Activated CD8-positive, alpha-beta T cell treated with anti-CD3 and anti-CD28 coated beads, Interleukin-2, amount 10 ng/mL, durations not matched to agents 7 days and 5 days (primary cell): ENCODE measurements at regions of chr1 and their contacts with region 1.

Region 1: DNA sequence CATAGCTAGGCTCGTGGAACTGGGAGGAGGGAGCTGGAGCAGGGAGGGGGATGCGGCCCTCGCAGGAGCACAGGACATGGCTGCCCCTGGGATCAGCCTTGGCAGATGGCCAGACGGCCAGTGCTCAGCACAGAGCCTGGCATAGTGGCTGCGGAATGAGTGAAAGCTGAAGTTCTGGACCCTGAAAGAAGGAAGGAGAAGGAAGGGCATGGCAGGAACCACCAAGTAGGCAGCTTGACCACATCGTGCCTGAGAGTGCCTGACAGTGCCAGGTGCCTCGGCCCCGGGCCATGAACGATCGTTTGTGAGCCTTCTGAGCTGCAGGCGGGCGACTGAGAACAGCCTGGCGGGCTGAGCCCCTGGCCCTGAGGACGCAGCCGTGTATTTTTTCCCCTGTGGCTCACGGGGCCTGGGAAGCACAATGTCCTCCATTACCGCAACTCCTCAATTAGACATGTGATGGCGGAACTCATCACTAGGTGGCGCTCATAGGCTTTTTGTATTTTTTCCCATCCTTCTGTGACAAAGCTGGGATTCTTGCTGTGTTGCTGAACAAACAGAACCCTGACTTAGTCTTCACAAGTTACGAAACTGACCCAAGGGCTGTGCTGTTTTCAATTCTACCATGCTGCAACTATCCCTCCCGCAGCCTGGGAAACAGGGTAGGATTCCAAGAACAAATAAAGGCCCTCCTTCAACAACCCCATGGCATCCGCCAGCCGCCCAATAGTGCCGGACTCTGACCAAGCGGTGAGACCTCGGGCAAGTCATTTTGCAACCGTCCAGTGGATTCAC is 29.9 kb upstream of the TMEM61 start:
- DNase-seq: peak; percentile 76
- ATAC-seq: peak; percentile 63
- H3K4me3 Mint-ChIP-seq: no peak overlapping the region
- H3K27ac Mint-ChIP-seq: peak overlapping the region; percentile 58
- H3K4me1 Mint-ChIP-seq: peaks cover 20% of the 10 kb centered on the region
- H3K27me3 Mint-ChIP-seq: peaks cover 7% of the 10 kb centered on the region

Region 2: GRCh38 chr1:54965624-54966340 is 15.2 kb after region 1 on chr1:
- CTCF ChIA-PET with region 1: interaction called, 18 read pairs
- POLR2A ChIA-PET with region 1: no interaction called
- DNase-seq: no peak
- ATAC-seq: peak; percentile 51
- H3K4me3 Mint-ChIP-seq: no peak overlapping the region
- H3K27ac Mint-ChIP-seq: no peak overlapping the region
- H3K4me1 Mint-ChIP-seq: peaks cover 10% of the 10 kb centered on the region
- H3K27me3 Mint-ChIP-seq: peaks cover 10% of the 10 kb centered on the region

Region 3: GRCh38 chr1:54996359-54996868 is 45.8 kb after region 1 on chr1:
- CTCF ChIA-PET with region 1: interaction called, 119 read pairs
- POLR2A ChIA-PET with region 1: interaction called, 3 read pairs
- DNase-seq: peak; percentile 86
- ATAC-seq: peak; percentile 82
- H3K4me3 Mint-ChIP-seq: peak overlapping the region; percentile 42
- H3K27ac Mint-ChIP-seq: peak overlapping the region; percentile 87
- H3K4me1 Mint-ChIP-seq: peaks cover 40% of the 10 kb centered on the region
- H3K27me3 Mint-ChIP-seq: peaks cover 32% of the 10 kb centered on the region

Region 4: DNA sequence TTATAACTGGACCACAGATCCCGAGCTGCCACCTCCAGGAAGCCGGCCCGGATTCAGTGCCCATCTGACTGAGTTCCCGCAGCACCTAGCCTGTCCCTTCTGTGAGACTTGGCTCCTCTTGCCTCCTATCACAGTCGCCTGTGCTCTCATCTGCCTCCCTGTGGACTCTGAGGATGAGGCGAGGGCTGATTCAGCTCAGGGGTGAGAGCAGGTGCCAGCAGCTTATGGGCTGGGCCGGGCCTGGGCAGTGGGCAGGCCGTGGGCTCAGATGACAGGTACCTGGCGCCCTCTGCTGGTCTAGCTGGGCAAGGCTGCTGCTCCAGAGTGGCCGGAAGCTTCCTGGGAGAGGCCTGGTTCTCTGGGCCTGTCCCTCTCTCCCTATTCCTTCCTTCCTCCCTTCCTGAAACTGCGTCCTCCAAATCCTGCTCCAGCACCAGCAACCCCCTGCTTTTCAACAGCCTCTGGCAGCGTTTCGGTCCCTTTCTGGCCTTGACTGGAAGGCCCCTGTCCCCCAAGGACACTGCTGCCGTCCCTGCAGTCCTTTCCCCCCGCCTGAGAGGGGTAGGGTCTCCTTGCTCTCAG is 71.5 kb after region 1 on chr1:
- CTCF ChIA-PET with region 1: interaction called, 94 read pairs
- POLR2A ChIA-PET with region 1: no interaction called
- DNase-seq: peak; percentile 78
- ATAC-seq: peak; percentile 99
- H3K4me3 Mint-ChIP-seq: no peak overlapping the region
- H3K27ac Mint-ChIP-seq: no peak overlapping the region
- H3K4me1 Mint-ChIP-seq: peaks cover 3% of the 10 kb centered on the region
- H3K27me3 Mint-ChIP-seq: peaks cover 3% of the 10 kb centered on the region

Region 5: DNA sequence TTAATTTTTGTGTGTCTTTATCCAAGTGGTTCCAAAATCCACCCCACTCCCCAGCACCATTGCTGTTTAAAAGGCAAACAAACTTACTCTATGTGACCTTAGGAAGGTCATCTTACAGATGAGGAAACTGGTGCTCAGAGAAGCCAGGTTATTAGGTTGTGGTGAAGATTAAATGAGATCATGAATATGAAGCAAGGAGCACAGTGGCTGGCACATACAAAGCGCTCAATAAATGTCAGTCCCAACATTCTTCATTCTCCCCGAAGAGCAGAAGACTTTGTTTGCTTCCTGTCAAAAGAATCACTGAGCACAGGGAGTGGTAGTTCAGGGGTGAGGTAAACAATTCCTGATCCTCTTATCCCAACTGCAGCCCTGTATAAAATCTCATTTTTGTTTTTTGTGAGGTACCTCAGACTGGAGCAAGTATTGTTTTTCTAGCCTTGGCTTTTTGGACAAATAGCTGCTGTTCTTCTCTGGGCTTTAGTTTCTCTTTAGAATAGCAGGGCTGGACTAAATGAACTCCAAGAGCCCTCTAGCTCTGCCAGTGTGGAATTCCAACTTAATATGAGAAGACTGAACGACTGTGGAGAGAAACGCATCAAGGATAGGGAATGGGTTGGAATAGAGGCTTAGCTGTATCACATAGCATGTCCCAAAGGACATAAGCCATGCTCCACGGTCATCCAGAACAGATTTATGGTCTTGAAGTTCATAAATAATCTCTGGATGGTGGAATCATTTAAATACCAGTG is 719.9 kb after region 1 on chr1:
- CTCF ChIA-PET with region 1: no interaction called
- POLR2A ChIA-PET with region 1: no interaction called
- DNase-seq: no peak
- ATAC-seq: no peak
- H3K4me3 Mint-ChIP-seq: no peak overlapping the region
- H3K27ac Mint-ChIP-seq: no peak overlapping the region
- H3K4me1 Mint-ChIP-seq: no peaks in the 10 kb centered on the region
- H3K27me3 Mint-ChIP-seq: no peaks in the 10 kb centered on the region